ENCODE measurements at regions of chr10 and their contacts with region 1.

Region 1: GRCh38 chr10:48551861-48552591 is 52.8 kb downstream of the ARHGAP22 start:
- DNase-seq: peak; percentile 75
- CTCF ChIP-seq: peak; percentile 57

Region 2: DNA sequence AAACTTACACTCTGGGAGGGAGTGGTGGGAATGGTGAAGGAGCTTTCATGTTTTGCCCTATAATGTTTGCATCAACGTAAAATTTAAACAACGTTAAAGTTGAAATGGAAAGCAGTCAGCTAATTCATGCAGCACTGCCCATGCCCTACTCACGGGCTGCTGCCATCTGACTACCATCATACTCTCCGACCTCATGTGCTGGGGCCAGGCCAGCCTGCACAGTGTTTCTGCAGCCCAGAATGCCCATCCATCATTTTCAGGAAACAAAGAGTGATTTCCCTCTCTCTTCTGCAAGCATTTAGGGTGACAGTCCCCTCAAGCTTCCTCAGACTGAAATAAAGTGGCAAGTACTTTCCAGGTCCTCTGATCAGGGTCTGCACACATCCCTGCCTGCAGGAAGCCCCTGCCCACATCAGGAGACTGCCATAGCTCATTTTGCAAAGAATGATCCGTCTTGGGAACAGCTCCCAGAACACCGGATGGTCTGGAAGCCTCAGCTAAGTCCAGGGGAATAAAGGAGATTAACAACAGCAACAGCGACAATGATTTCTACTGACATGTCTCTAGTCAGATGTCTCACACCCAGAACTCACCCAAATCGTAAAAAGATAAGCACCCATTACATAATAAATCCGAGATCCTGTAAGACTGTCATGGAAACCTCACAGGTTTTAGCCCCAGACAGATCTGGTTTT is 12.6 kb after region 1 on chr10:
- CTCF ChIA-PET with region 1: interaction called, 20 read pairs
- POLR2A ChIA-PET with region 1: no interaction called
- DNase-seq: no peak
- CTCF ChIP-seq: no peak

Region 3: GRCh38 chr10:48572414-48572813 is 20.4 kb after region 1 on chr10:
- CTCF ChIA-PET with region 1: interaction called, 12 read pairs
- POLR2A ChIA-PET with region 1: no interaction called
- DNase-seq: no peak
- CTCF ChIP-seq: no peak

Measured in GM10248 (cell line).